Activated T-helper 1 cell treated with anti-CD3 and anti-CD28 coated beads, Interleukin-12 subunit alpha, Interleukin-12 subunit beta, Interleukin-2, Interleukin-4 antibody, amounts not matched to agents 30 ng/mL and 10 ng/mL and 1 ng/mL, durations not matched to agents 14 hours and 24 hours and 36 hours (primary cell): ENCODE measurements at regions of chr1 and their contacts with region 1.

Region 1: DNA sequence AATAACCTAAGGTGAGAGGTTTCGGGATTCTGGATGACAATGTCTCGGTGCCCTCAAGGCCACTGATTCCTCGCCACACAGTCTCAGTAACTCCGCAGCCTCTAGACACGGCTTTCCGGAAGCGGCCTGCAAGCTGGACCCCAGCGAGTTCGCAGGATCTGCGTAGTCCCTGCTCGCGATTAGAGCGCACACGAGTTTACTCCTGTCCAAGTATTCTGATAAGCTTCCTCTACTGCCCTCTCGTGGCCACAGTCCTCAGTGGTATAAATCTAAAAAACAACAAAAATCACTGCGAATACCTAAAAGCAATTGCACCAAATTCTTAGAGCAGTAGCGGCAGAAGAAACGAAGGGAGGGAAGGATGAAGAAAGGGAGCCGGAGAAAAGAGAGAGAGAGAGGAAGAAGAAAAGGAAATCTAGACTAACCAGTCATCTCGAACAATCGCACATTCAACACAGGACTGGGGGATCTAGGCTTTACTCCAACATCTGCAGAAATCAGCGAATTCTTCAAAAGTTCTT is 1.1 kb upstream of the PLXNA2 start:
- DNase-seq: peak; percentile 61
- H3K4me3 Mint-ChIP-seq: peak overlapping the region; percentile 65
- H3K27ac Mint-ChIP-seq: no peak overlapping the region
- H3K4me1 Mint-ChIP-seq: peaks cover 12% of the 10 kb centered on the region
- H3K27me3 Mint-ChIP-seq: peaks cover 51% of the 10 kb centered on the region

Region 2: DNA sequence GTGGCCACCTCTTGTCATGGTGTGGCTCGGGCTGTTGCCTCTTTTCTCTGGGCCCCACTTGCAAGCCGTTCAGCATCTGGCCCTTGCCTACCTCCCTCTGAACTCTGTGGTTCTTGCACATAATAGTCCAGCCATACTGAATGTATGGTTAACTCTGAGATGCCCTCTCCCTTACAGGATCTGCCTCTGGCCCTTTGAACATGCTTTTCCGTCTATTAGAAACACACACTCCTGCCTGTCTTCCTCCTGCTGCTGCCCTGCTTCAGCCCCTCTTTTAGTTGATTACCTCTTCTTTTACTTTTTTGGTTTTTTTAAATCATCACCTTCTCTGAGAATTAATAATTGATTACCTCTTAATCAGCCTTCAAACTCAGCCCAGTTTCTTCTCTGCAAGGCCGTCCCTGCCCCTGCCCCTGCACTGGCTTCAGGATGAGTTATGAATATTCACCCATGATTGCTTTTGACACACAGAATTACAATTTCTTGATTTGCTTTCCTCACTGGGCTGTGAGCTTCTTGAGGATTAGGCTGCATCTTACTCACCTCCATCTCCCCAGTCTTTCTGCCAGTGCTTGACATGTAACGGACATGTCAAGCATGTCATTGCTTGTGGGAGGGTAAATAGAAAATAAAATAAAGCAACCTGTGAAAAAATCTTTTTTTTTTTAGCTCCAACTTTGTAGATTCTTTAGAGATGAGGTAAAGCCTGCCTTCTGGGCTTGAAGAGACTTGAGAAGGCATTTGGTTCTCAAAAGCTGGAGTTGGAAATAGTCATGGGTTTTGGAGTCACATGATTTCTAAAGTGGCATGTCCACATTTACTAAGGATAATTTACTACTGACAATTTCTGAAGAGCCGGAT is 159.4 kb before region 1 on chr1:
- intact Hi-C with region 1: loop called (anchors 2 kb)
- DNase-seq: no peak
- H3K4me3 Mint-ChIP-seq: peak overlapping the region; percentile 41
- H3K27ac Mint-ChIP-seq: peak overlapping the region; percentile 21
- H3K4me1 Mint-ChIP-seq: peaks cover 19% of the 10 kb centered on the region
- H3K27me3 Mint-ChIP-seq: peaks cover 2% of the 10 kb centered on the region

Region 3: GRCh38 chr1:208132287-208132883 is 112.9 kb before region 1 on chr1:
- intact Hi-C with region 1: loop called (anchors 1 kb)
- DNase-seq: peak; percentile 22
- H3K4me3 Mint-ChIP-seq: no peak overlapping the region
- H3K27ac Mint-ChIP-seq: no peak overlapping the region
- H3K4me1 Mint-ChIP-seq: no peaks in the 10 kb centered on the region
- H3K27me3 Mint-ChIP-seq: peaks cover 14% of the 10 kb centered on the region

Region 4: GRCh38 chr1:208219659-208220282 is 25.5 kb before region 1 on chr1:
- intact Hi-C with region 1: no loop called
- DNase-seq: no peak
- H3K4me3 Mint-ChIP-seq: no peak overlapping the region
- H3K27ac Mint-ChIP-seq: no peak overlapping the region
- H3K4me1 Mint-ChIP-seq: no peaks in the 10 kb centered on the region
- H3K27me3 Mint-ChIP-seq: peaks cover 13% of the 10 kb centered on the region